ENCODE measurements at regions of chr6 and their contacts with region 1.

Region 1: GRCh38 chr6:159252955-159253508 is 83.8 kb downstream of the FNDC1 start:
- DNase-seq: peak; percentile 3
- ATAC-seq: peak; percentile 72
- H3K4me3 Mint-ChIP-seq: no peak overlapping the region
- H3K27ac Mint-ChIP-seq: no peak overlapping the region
- H3K4me1 Mint-ChIP-seq: peaks cover 1% of the 10 kb centered on the region
- H3K27me3 Mint-ChIP-seq: peaks cover 9% of the 10 kb centered on the region
- CTCF ChIP-seq: peak; percentile 68

Region 2: GRCh38 chr6:159098636-159099106 is 154.4 kb before region 1 on chr6:
- CTCF ChIA-PET with region 1: no interaction called
- POLR2A ChIA-PET with region 1: no interaction called
- intact Hi-C with region 1: no loop called
- DNase-seq: peak; percentile 84
- ATAC-seq: peak; percentile 43
- H3K4me3 Mint-ChIP-seq: peak overlapping the region; percentile 69
- H3K27ac Mint-ChIP-seq: peak overlapping the region; percentile 96
- H3K4me1 Mint-ChIP-seq: peaks cover 93% of the 10 kb centered on the region
- H3K27me3 Mint-ChIP-seq: no peaks in the 10 kb centered on the region
- CTCF ChIP-seq: no peak

Region 3: DNA sequence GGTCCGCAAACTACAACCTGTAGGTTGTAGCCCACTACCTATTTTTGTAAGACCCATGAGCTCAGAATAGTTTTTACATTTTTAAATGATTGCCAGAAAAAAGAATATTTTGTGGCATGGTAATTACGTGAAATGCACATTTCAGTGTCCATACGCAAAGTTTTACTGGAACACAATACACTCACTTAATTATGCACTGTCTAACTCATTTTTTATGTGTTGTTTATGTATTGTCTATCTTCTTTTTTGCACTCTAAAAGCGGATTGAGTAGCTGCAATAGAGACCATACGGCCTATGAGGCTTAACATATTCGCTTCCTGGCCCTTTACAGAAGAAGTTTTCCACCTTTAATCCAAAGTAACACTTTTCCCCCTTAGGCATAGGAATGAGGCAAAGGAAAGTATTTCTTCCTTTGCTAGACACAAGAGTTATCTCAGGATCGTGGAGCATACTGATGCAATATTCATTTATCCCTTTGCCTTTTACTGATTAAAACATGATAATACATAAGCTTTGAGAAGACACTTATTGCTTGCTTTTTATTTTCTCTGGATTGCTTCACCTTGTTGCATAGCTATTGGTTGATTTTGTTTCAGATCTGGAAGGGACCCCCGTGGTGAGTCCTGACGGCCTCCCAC is 14.0 kb before region 1 on chr6:
- CTCF ChIA-PET with region 1: interaction called, 34 read pairs
- POLR2A ChIA-PET with region 1: interaction called, 3 read pairs
- intact Hi-C with region 1: no loop called
- DNase-seq: no peak
- ATAC-seq: no peak
- H3K4me3 Mint-ChIP-seq: no peak overlapping the region
- H3K27ac Mint-ChIP-seq: no peak overlapping the region
- H3K4me1 Mint-ChIP-seq: peaks cover 2% of the 10 kb centered on the region
- H3K27me3 Mint-ChIP-seq: peaks cover 31% of the 10 kb centered on the region
- CTCF ChIP-seq: no peak

Region 4: DNA sequence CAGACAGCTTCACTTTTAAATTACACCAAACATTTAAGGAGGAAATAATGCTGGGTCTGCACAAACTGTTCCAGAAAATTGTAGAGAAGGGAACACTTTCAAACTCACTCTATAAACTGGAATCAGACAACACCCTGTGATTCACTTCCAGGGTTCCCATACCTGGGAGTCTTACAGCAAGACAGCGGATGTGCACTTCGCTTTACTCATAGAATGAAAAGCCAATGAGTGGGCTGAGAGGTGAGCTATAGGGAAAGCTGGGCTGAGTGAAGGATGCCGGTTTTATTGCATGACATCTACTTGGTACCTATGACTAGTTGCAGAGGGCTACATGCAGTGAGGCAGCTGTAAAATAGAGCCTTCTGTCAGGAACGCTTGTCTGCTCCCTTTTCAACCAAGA is 68.2 kb after region 1 on chr6:
- CTCF ChIA-PET with region 1: interaction called, 13 read pairs
- POLR2A ChIA-PET with region 1: no interaction called
- intact Hi-C with region 1: no loop called
- DNase-seq: no peak
- ATAC-seq: no peak
- H3K4me3 Mint-ChIP-seq: no peak overlapping the region
- H3K27ac Mint-ChIP-seq: no peak overlapping the region
- H3K4me1 Mint-ChIP-seq: no peaks in the 10 kb centered on the region
- H3K27me3 Mint-ChIP-seq: peaks cover 7% of the 10 kb centered on the region
- CTCF ChIP-seq: no peak

Measured in activated CD8-positive, alpha-beta T cell treated with anti-CD3 and anti-CD28 coated beads for 36 hours (primary cell).